ENCODE measurements at regions of chr16 and their contacts with region 1.

Region 1: GRCh38 chr16:14501331-14502255 is 128.5 kb downstream of the PARN start:
- DNase-seq: peak; percentile 94

Region 2: GRCh38 chr16:13223666-13224065 is 1277.9 kb before region 1 on chr16:
- in situ Hi-C with region 1: no loop called
- DNase-seq: no peak

Region 3: DNA sequence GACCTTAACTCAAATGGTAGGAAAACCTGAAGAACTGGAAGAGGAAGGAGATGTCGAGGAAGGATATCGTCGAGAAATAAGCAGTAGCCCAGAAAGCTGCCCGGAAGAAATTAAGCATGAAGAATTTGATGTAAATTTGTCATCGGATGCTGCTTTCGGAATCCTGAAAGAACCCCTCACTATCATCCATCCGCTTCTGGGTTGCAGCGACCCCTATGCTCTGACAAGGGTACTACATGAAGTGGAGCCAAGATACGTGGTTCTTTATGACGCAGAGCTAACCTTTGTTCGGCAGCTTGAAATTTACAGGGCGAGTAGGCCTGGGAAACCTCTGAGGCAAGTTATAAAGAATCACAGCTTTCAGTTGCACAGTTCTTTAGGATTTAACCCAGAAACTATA is 566.2 kb before region 1 on chr16:
- in situ Hi-C with region 1: loop called (anchors 25 kb)
- DNase-seq: no peak